Caco-2 (cell line): ENCODE measurements at regions of chr6 and their contacts with region 1.

Region 1: DNA sequence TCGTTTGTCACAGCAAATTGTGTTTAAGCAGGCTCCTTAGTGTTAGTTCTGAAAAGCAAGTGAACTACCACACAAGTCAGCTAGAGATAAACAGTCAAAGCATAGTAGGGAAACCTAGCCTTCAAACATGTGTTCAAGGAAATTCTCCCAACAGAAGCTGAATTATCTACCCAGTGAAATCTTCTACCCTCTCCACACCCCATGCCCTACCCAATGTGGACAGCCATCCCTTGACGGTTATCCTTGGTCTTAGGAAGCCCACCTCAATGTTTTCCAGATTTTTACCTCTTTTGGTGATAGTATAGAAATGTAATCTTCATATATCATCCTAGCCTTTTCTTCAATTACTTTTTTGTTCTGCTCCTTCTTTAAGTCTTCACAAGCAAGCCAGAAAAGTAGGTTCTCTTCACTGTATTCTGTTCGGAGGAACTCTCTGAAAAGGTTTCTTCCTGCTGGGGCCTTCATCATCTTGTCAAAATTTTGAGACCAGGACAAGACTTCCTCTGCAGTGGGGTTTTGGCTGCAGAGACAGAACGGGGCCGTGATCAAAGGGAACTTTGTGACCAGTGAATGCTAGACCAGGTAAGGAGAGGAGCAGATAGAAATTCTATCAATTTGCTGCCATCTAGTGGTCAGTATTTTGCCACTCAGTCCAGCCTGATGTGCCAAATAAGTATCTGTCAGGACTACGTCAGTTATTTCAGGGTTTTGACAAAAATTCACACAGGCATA is 21.6 kb upstream of the MTRF1L start:
- DNase-seq: peak; percentile 52 to 59
- H3K4me3 ChIP-seq: no peak overlapping the region
- H3K4me3 Mint-ChIP-seq: no peak overlapping the region
- H3K27ac Mint-ChIP-seq: no peak overlapping the region
- H3K4me1 ChIP-seq: no peaks in the 10 kb centered on the region
- H3K4me1 Mint-ChIP-seq: no peaks in the 10 kb centered on the region
- H3K27me3 ChIP-seq: no peaks in the 10 kb centered on the region
- H3K27me3 Mint-ChIP-seq: peaks cover 9% of the 10 kb centered on the region
- CTCF ChIP-seq: peak; percentile 66 to 72

Region 2: GRCh38 chr6:152954443-152954842 is 69.7 kb before region 1 on chr6:
- CTCF ChIA-PET with region 1: interaction called, 3 read pairs
- POLR2A ChIA-PET with region 1: no interaction called
- intact Hi-C with region 1: loop called (anchors 1 kb)
- DNase-seq: no peak
- H3K4me3 ChIP-seq: no peak overlapping the region
- H3K4me3 Mint-ChIP-seq: no peak overlapping the region
- H3K27ac Mint-ChIP-seq: no peak overlapping the region
- H3K4me1 ChIP-seq: no peaks in the 10 kb centered on the region
- H3K4me1 Mint-ChIP-seq: peaks cover 7% of the 10 kb centered on the region
- H3K27me3 ChIP-seq: no peaks in the 10 kb centered on the region
- H3K27me3 Mint-ChIP-seq: peaks cover 2% of the 10 kb centered on the region
- CTCF ChIP-seq: no peak

Region 3: GRCh38 chr6:152982768-152983636 is 41.1 kb before region 1 on chr6 and contains the start of gene FBXO5:
- CTCF ChIA-PET with region 1: no interaction called
- POLR2A ChIA-PET with region 1: interaction called, 6 read pairs
- intact Hi-C with region 1: loop called (anchors 2 kb)
- DNase-seq: peak; percentile 96 to 97
- H3K4me3 ChIP-seq: peak within 1 kb of the TSS; percentile 99
- H3K4me3 Mint-ChIP-seq: peak within 1 kb of the TSS; percentile 78
- H3K27ac Mint-ChIP-seq: peak within 1 kb of the TSS; percentile 92
- H3K4me1 ChIP-seq: peaks cover 15% of the 10 kb centered on the region
- H3K4me1 Mint-ChIP-seq: peaks cover 20% of the 10 kb centered on the region
- H3K27me3 ChIP-seq: no peaks in the 10 kb centered on the region
- H3K27me3 Mint-ChIP-seq: no peaks in the 10 kb centered on the region
- CTCF ChIP-seq: no peak
- total RNA-seq, gene FBXO5: 31.4 and 35.5 TPM in 2 replicates

Region 4: GRCh38 chr6:153002607-153003365 is 21.4 kb before region 1 on chr6 and contains the start of gene MTRF1L:
- CTCF ChIA-PET with region 1: no interaction called
- POLR2A ChIA-PET with region 1: no interaction called
- intact Hi-C with region 1: loop called (anchors 1 kb)
- DNase-seq: peak; percentile 93 to 94
- H3K4me3 ChIP-seq: peak within 1 kb of the TSS; percentile 93
- H3K4me3 Mint-ChIP-seq: peak within 1 kb of the TSS; percentile 90
- H3K27ac Mint-ChIP-seq: peak within 1 kb of the TSS; percentile 97
- H3K4me1 ChIP-seq: no peaks in the 10 kb centered on the region
- H3K4me1 Mint-ChIP-seq: peaks cover 10% of the 10 kb centered on the region
- H3K27me3 ChIP-seq: no peaks in the 10 kb centered on the region
- H3K27me3 Mint-ChIP-seq: no peaks in the 10 kb centered on the region
- CTCF ChIP-seq: no peak
- total RNA-seq, gene MTRF1L: 24.4 and 26.3 TPM in 2 replicates